Activated CD4-positive, alpha-beta memory T cell treated with anti-CD3 and anti-CD28 coated beads, Interleukin-2, amount 10 ng/mL, durations not matched to agents 7 days and 5 days (primary cell): ENCODE measurements at regions of chr7 and their contacts with region 1.

Region 1: DNA sequence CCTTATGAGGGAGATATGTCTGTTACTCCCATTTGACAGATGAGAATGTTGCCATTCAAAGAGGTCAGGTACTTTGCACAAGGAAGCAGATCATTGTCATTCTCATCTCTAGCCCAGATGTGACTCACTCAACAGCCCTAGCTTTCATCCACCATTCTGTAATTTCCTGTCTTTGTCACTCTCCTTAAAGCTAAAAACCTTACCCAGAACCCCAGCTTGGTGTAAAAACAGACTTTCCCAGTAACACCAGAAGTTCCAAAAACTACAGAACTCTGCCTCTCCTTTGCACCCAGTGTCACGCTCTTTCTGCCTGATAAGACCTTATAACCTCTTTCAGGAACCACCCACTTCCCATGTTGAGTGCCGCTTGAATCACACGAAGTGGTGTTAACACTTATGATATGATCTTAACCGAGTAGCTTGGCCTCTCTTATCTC is 89.1 kb upstream of the SP4 start:
- DNase-seq: peak; percentile 78
- H3K4me3 Mint-ChIP-seq: peak overlapping the region; percentile 31
- H3K27ac Mint-ChIP-seq: peak overlapping the region; percentile 95
- H3K4me1 Mint-ChIP-seq: peaks cover 58% of the 10 kb centered on the region
- H3K27me3 Mint-ChIP-seq: no peaks in the 10 kb centered on the region

Region 2: DNA sequence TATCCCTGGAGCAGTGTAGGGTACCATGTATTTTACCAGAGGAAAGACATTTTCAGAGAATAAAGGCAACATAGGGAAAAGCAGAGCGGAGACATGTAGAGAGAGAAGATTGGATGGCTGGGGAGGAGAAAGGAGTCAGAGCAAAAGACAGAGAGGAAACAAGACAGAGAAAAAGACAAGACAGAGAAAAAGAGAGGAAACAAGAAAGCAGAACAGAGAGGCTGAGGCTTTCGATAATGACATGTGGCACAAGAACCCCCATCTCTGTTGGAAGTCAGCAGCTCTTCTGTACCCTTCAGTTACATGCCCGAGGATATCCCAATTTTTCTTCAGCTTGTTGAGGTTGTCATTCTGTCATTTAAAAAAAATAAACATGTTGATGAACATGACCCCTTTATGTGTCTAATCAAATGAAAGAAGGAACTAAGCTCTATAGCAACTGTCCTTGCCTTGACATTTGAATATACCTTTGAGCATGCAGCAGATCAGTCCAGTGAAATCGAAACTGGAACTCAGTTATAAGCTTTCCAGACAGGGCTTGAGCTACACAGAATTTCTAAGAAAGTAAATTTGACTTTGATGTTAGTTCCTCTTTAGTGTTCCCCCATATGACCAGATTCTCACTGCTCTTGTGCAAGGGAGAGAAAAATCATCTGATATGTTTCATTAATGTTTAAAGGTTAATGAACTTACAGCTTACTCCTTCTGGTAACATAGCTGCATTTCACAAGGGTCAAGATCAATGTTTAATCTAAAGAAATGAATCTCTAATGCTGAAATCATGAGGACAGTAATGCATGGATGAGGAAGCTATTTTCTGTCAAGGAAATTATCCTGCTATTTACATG is 14.0 kb after region 1 on chr7:
- CTCF ChIA-PET with region 1: interaction called, 25 read pairs
- POLR2A ChIA-PET with region 1: interaction called, 135 read pairs
- DNase-seq: no peak
- H3K4me3 Mint-ChIP-seq: peak overlapping the region; percentile 67
- H3K27ac Mint-ChIP-seq: peak overlapping the region; percentile 98
- H3K4me1 Mint-ChIP-seq: peaks cover 69% of the 10 kb centered on the region
- H3K27me3 Mint-ChIP-seq: no peaks in the 10 kb centered on the region

Region 3: DNA sequence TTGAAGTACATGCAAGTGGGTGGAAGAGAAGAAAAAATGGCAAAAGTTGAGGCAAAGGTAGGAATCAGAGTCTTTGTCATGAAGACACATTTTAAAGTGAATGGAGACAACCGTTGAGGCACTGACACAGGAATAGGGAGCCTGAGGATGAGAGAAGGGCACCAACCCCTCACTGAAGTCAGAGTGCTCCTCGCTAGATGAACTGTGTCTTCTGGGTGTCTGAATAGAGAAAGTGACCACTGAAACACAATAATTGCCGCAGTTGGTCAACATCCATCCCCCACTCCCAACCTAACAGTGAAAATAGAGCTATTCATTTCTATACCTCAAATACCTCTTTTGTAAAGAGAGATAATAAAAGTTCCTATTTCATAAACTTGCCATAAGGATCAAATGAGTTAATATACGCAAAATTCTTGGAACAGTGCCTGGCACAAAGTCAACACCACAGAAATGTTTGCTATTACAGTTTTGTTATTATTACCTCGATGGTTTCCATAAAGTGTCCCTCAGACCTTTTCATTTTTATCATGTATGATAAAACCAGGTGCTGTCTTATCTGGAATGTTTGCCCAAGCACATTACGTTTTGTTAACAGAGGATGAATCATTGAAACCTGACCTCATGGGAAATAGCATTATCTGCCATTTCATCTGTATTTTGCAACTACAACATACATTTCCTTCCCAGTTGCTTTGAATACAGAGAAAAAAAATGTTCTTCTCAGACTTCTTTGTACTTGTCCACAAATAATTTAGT is 27.3 kb after region 1 on chr7:
- CTCF ChIA-PET with region 1: no interaction called
- POLR2A ChIA-PET with region 1: interaction called, 19 read pairs
- DNase-seq: no peak
- H3K4me3 Mint-ChIP-seq: no peak overlapping the region
- H3K27ac Mint-ChIP-seq: peak overlapping the region; percentile 71
- H3K4me1 Mint-ChIP-seq: peaks cover 65% of the 10 kb centered on the region
- H3K27me3 Mint-ChIP-seq: no peaks in the 10 kb centered on the region

Region 4: GRCh38 chr7:21383227-21384220 is 44.8 kb after region 1 on chr7:
- CTCF ChIA-PET with region 1: interaction called, 10 read pairs
- POLR2A ChIA-PET with region 1: interaction called, 11 read pairs
- DNase-seq: no peak
- H3K4me3 Mint-ChIP-seq: peak overlapping the region; percentile 53
- H3K27ac Mint-ChIP-seq: peak overlapping the region; percentile 79
- H3K4me1 Mint-ChIP-seq: peaks cover 33% of the 10 kb centered on the region
- H3K27me3 Mint-ChIP-seq: no peaks in the 10 kb centered on the region